Tibial artery (tissue), 4 donors: ENCODE measurements at regions of chr17 and their contacts with region 1.

Region 1: DNA sequence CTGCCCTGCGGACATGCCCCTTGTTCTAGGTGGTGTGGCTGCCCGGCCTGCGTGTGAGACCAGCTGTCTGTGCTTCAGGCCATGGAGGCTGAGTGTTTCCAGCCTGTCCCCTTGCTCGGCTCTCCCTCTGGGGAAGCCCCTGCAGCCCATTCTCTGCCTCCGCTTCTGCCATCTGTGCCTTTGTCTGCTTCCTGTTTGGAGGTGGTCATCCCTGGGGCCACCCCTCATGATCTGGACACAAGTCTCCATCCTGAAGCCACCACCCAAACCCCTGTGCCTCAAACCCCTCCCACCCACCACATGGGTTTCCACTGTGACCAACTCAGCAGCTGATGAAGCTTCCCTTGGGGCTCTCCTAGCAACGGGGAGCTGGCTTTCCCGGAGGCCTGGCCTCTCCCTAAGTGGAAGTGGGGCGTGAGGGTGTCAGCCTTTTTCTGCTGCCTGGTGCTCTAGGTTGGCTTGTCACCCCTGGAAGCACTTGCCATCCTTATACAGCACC is 184.9 kb downstream of the SEC14L1 start:
- DNase-seq: no peak
- H3K4me3 ChIP-seq: no peak overlapping the region
- H3K27ac ChIP-seq: peak overlapping the region; percentile 90 to 92
- H3K4me1 ChIP-seq: peaks cover 24 to 63% (median 48%) of the 10 kb centered on the region in 4 donors
- H3K27me3 ChIP-seq: no peaks in the 10 kb centered on the region
- CTCF ChIP-seq: no peak

Region 2: DNA sequence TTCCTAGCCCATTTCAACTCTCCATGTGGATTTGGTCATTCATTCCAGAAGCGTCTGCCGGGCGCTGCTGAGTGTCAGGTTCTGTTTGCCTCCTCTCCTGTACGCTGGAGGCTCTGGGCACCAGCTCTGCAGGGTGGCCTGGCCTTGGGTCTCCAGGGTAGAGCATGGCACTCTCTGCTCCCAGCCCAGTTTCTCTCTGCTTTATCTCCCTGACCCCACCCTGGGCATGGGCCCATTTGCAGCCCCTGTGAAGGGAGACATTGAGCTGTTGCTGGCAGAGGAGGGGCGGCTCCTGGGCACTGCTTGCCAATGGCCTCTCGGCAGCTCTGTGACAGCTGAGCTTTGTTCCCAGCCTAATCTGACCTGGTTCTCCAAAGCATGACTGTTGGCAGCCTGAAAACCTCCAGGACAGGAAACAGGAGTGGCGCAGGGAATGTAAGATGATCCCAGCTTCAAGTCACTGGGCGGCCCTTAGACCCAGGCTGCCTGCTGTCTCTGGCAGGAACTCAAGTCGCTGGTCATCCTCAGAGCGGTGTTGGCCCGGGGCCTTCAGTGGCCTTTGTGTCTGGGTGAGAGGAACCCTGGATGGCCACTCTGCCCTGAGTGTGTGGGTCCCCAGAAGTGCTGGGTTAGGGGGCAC is 38.1 kb before region 1 on chr17:
- intact Hi-C with region 1: no loop called
- DNase-seq: no peak
- H3K4me3 ChIP-seq: no peak overlapping the region
- H3K27ac ChIP-seq: peak overlapping the region in 1 of 2 donors; percentile 18
- H3K4me1 ChIP-seq: peaks cover 0 to 39% (median 17%) of the 10 kb centered on the region in 4 donors
- H3K27me3 ChIP-seq: peaks cover 0 to 26% of the 10 kb centered on the region in 2 donors
- CTCF ChIP-seq: no peak

Region 3: GRCh38 chr17:77365584-77366186 is 40.1 kb after region 1 on chr17:
- intact Hi-C with region 1: loop called (anchors 5 kb)
- DNase-seq: peak; percentile 85 to 97
- H3K4me3 ChIP-seq: peak overlapping the region; percentile 6 to 14
- H3K27ac ChIP-seq: peak overlapping the region; percentile 88 to 91
- H3K4me1 ChIP-seq: peaks cover 0 to 59% (median 36%) of the 10 kb centered on the region in 4 donors
- H3K27me3 ChIP-seq: no peaks in the 10 kb centered on the region
- CTCF ChIP-seq: peak; percentile 8 to 9